ENCODE measurements at regions of chr13 and their contacts with region 1.

Region 1: GRCh38 chr13:77751513-77752456 is 54.3 kb downstream of the SLAIN1 start:
- DNase-seq: peak in 1 of 2 donors; percentile 22
- ATAC-seq: peak in 6 of 8 donors; percentile 42 to 70 (median 57)
- H3K4me3 ChIP-seq: no peak overlapping the region
- H3K27ac ChIP-seq: no peak overlapping the region
- H3K4me1 ChIP-seq: peaks cover 0 to 8% (median 0%) of the 10 kb centered on the region in 9 donors
- H3K27me3 ChIP-seq: no peaks in the 10 kb centered on the region
- CTCF ChIP-seq: peak; percentile 50 to 84 (median 76)

Region 2: GRCh38 chr13:77492982-77493381 is 258.8 kb before region 1 on chr13:
- intact Hi-C with region 1: loop called in 8 of 10 experiments (anchors 5 to 10 kb)
- DNase-seq: no peak
- ATAC-seq: peak in 5 of 8 donors; percentile 33 to 58 (median 49)
- H3K4me3 ChIP-seq: no peak overlapping the region
- H3K27ac ChIP-seq: no peak overlapping the region
- H3K4me1 ChIP-seq: peaks cover 0 to 8% (median 0%) of the 10 kb centered on the region in 9 donors
- H3K27me3 ChIP-seq: no peaks in the 10 kb centered on the region
- CTCF ChIP-seq: peak in 7 of 9 donors; percentile 35 to 64 (median 52)

Region 3: DNA sequence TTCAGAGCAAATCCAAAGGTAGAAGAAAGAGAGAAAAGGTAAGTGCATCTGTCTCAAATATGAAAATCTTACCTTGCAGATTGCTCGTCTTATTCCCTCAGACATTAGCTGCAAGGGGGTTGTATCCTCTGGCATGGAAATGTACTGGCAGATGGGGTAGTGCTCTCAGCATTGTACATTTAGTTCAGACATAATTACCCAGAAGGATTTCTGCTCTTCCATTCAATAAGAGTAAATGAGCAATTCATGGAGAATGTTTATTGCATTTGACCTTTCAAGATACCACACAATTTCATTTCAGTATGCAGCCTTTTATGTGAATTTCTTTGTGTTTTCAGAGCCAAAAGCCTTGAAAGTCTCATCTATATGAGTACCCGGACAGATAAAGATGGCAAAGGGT is 152.4 kb before region 1 on chr13:
- intact Hi-C with region 1: loop called in 9 of 10 experiments (anchors 5 to 10 kb)
- DNase-seq: no peak
- ATAC-seq: no peak
- H3K4me3 ChIP-seq: no peak overlapping the region
- H3K27ac ChIP-seq: no peak overlapping the region
- H3K4me1 ChIP-seq: no peaks in the 10 kb centered on the region
- H3K27me3 ChIP-seq: peaks cover 0 to 14% (median 0%) of the 10 kb centered on the region in 7 donors
- CTCF ChIP-seq: no peak

Region 4: DNA sequence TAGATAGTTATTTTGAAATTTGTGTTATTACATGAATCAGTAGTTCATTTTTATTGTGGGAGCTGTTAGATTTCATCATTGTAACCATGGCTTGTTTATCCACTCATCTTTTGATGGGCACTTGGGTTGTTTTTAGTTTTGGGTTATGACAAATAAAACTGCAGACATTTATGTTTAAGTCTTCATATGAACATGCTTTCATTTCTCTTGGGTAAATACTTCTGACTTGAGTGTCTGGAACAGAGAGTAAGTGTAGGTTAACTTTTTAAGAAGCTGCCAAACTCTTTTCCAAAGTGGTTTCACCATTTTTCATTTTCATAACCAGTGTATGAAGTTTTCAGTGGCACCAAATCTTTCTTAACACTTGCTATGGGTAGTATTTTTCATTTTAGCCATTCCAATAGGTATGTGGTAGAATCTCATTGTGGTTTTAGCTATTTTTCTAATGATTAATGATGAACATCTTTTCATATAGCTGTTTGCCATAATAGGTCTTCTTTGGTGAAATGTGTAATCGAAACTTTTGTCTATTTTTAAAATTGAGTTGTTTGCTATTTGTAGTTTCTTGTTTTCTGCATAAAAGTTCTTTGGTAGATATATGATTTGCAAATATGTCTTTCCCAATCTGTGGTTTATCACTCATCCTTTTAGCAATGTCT is 36.4 kb before region 1 on chr13:
- intact Hi-C with region 1: no loop called
- DNase-seq: no peak
- ATAC-seq: no peak
- H3K4me3 ChIP-seq: no peak overlapping the region
- H3K27ac ChIP-seq: no peak overlapping the region
- H3K4me1 ChIP-seq: no peaks in the 10 kb centered on the region
- H3K27me3 ChIP-seq: no peaks in the 10 kb centered on the region
- CTCF ChIP-seq: no peak